Activated CD4-positive, alpha-beta memory T cell treated with anti-CD3 and anti-CD28 coated beads, Interleukin-2, amount 10 ng/mL, durations not matched to agents 7 days and 5 days (primary cell): ENCODE measurements at regions of chr5 and their contacts with region 1.

Region 1: GRCh38 chr5:134586866-134587524 is 45.6 kb downstream of the SAR1B start:
- DNase-seq: peak; percentile 85
- H3K4me3 Mint-ChIP-seq: no peak overlapping the region
- H3K27ac Mint-ChIP-seq: peak overlapping the region; percentile 14
- H3K4me1 Mint-ChIP-seq: peaks cover 19% of the 10 kb centered on the region
- H3K27me3 Mint-ChIP-seq: no peaks in the 10 kb centered on the region

Region 2: DNA sequence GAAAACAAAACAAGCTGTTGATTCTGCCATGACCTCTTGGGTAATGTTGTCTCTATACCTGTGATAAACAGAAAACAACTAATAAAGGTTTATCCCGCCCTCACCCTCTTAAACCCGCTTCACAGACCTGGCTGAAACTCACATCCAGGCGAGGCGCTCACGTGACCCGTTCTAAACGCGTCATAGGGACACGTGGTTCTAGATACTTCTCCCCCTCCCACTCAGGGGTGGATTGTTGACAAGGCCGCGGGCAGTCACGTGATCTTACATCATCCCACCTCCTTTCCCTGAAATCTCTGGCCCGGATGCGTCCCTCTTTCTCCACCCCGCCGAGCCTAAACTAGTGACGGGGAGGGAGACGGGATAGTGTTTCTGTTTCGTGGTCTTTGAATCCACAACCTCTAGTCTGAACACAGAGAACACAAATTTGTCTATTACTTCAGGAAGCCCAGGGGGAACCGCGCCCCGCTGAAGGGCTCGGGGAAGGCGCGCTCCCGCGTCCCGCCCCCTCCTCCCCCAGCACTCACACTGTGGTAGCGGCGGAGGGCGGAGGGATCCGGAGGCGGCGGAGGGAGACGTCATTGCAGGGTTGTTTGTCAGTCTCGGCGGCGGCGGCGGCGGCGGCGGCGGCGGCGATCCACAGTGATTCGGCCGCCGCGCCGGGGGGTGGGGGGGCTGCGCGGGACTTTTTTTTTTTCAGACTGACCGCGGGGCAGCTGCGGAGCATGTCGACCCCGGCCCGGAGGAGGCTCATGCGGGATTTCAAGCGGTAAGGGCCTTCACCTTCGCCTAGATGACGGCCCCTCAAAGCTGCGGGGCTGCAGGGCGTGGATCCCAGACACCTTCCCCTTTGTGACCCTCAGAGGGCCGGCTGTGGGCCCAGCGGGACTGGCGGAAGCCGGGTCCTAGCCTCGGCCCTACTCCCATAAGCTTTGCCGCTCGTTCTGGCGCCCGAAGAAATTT is 215.8 kb before region 1 on chr5 and contains the start of gene UBE2B:
- CTCF ChIA-PET with region 1: interaction called, 23 read pairs
- POLR2A ChIA-PET with region 1: interaction called, 6 read pairs
- DNase-seq: peak; percentile 98
- H3K4me3 Mint-ChIP-seq: peak within 1 kb of the TSS; percentile 97
- H3K27ac Mint-ChIP-seq: peak within 1 kb of the TSS; percentile 98
- H3K4me1 Mint-ChIP-seq: peaks cover 46% of the 10 kb centered on the region
- H3K27me3 Mint-ChIP-seq: peaks cover 2% of the 10 kb centered on the region
- total RNA-seq, gene UBE2B: 115 to 116 TPM

Region 3: GRCh38 chr5:134527146-134527960 is 59.6 kb before region 1 on chr5:
- CTCF ChIA-PET with region 1: interaction called, 13 read pairs
- POLR2A ChIA-PET with region 1: no interaction called
- DNase-seq: peak; percentile 74
- H3K4me3 Mint-ChIP-seq: peak overlapping the region; percentile 93
- H3K27ac Mint-ChIP-seq: peak overlapping the region; percentile 89
- H3K4me1 Mint-ChIP-seq: peaks cover 37% of the 10 kb centered on the region
- H3K27me3 Mint-ChIP-seq: peaks cover 5% of the 10 kb centered on the region

Region 4: GRCh38 chr5:134609232-134609851 is 22.3 kb after region 1 on chr5:
- CTCF ChIA-PET with region 1: interaction called, 30 read pairs
- POLR2A ChIA-PET with region 1: interaction called, 6 read pairs
- DNase-seq: no peak
- H3K4me3 Mint-ChIP-seq: peak overlapping the region; percentile 21
- H3K27ac Mint-ChIP-seq: peak overlapping the region; percentile 92
- H3K4me1 Mint-ChIP-seq: peaks cover 52% of the 10 kb centered on the region
- H3K27me3 Mint-ChIP-seq: no peaks in the 10 kb centered on the region

Region 5: GRCh38 chr5:134738133-134738962 is 151.4 kb after region 1 on chr5 and contains the start of gene CAMLG:
- CTCF ChIA-PET with region 1: interaction called, 26 read pairs
- POLR2A ChIA-PET with region 1: interaction called, 5 read pairs
- DNase-seq: peak; percentile 98
- H3K4me3 Mint-ChIP-seq: peak within 1 kb of the TSS; percentile 92
- H3K27ac Mint-ChIP-seq: peak within 1 kb of the TSS; percentile 84
- H3K4me1 Mint-ChIP-seq: peaks cover 34% of the 10 kb centered on the region
- H3K27me3 Mint-ChIP-seq: no peaks in the 10 kb centered on the region
- total RNA-seq, gene CAMLG: 30.5 to 31.0 TPM